ENCODE measurements at regions of chr1 and their contacts with region 1.

Region 1: GRCh38 chr1:236303687-236304086 is 21.9 kb upstream of the ERO1B start:
- DNase-seq: peak in 6 of 9 experiments; percentile 7 to 51 (median 30)
- ATAC-seq: peak; percentile 51
- H3K4me3 ChIP-seq: no peak overlapping the region
- H3K4me3 Mint-ChIP-seq: no peak overlapping the region
- H3K27ac ChIP-seq: no peak overlapping the region
- H3K27ac Mint-ChIP-seq: no peak overlapping the region
- H3K4me1 ChIP-seq: no peaks in the 10 kb centered on the region
- H3K4me1 Mint-ChIP-seq: no peaks in the 10 kb centered on the region
- H3K27me3 ChIP-seq: no peaks in the 10 kb centered on the region
- H3K27me3 Mint-ChIP-seq: no peaks in the 10 kb centered on the region
- CTCF ChIP-seq: no peak

Region 2: DNA sequence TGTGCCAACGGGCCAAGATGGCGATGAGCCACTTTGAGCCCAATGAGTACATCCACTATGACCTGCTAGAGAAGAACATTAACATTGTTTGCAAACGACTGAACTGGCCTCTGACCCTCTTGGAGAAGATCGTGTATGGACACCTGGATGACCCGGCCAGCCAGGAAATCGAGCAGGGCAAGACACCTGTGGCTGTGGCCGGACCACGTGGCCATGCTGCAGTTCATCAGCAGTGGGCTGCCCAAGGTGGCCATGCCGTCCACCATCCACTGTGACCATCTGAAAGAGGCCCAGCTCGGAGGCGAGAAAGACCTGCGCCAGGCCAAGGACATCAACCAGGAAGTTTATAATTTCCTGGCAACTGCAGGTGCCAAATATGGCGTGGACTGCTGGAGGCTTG is 193.6 kb before region 1 on chr1:
- CTCF ChIA-PET with region 1: interaction called, 11 read pairs
- POLR2A ChIA-PET with region 1: no interaction called
- intact Hi-C with region 1: loop called in 1 of 2 experiments (anchors 1 kb)
- DNase-seq: no peak
- ATAC-seq: no peak
- H3K4me3 ChIP-seq: no peak overlapping the region
- H3K4me3 Mint-ChIP-seq: no peak overlapping the region
- H3K27ac ChIP-seq: no peak overlapping the region
- H3K27ac Mint-ChIP-seq: no peak overlapping the region
- H3K4me1 ChIP-seq: no peaks in the 10 kb centered on the region
- H3K4me1 Mint-ChIP-seq: no peaks in the 10 kb centered on the region
- H3K27me3 ChIP-seq: no peaks in the 10 kb centered on the region
- H3K27me3 Mint-ChIP-seq: peaks cover 2% of the 10 kb centered on the region
- CTCF ChIP-seq: no peak

Measured in CD8-positive, alpha-beta T cell (primary cell).